MCF 10A (cell line): ENCODE measurements at regions of chr6 and their contacts with region 1.

Region 1: GRCh38 chr6:52724406-52725121 is 38.7 kb downstream of the GSTA2 start:
- DNase-seq: peak; percentile 88
- H3K4me3 Mint-ChIP-seq: peak overlapping the region; percentile 6
- H3K27ac Mint-ChIP-seq: peak overlapping the region; percentile 50
- H3K4me1 Mint-ChIP-seq: peaks cover 28% of the 10 kb centered on the region
- H3K27me3 Mint-ChIP-seq: no peaks in the 10 kb centered on the region
- CTCF ChIP-seq: peak; percentile 47

Region 2: GRCh38 chr6:52840763-52841585 is 116.4 kb after region 1 on chr6 and contains the start of gene GSTA5:
- CTCF ChIA-PET with region 1: no interaction called
- POLR2A ChIA-PET with region 1: no interaction called
- intact Hi-C with region 1: no loop called
- DNase-seq: peak; percentile 30
- H3K4me3 Mint-ChIP-seq: no peak within 1 kb of the TSS
- H3K27ac Mint-ChIP-seq: no peak within 1 kb of the TSS
- H3K4me1 Mint-ChIP-seq: no peaks in the 10 kb centered on the region
- H3K27me3 Mint-ChIP-seq: peaks cover 27% of the 10 kb centered on the region
- CTCF ChIP-seq: no peak
- total RNA-seq, gene GSTA5: not detected in 2 replicates

Region 3: DNA sequence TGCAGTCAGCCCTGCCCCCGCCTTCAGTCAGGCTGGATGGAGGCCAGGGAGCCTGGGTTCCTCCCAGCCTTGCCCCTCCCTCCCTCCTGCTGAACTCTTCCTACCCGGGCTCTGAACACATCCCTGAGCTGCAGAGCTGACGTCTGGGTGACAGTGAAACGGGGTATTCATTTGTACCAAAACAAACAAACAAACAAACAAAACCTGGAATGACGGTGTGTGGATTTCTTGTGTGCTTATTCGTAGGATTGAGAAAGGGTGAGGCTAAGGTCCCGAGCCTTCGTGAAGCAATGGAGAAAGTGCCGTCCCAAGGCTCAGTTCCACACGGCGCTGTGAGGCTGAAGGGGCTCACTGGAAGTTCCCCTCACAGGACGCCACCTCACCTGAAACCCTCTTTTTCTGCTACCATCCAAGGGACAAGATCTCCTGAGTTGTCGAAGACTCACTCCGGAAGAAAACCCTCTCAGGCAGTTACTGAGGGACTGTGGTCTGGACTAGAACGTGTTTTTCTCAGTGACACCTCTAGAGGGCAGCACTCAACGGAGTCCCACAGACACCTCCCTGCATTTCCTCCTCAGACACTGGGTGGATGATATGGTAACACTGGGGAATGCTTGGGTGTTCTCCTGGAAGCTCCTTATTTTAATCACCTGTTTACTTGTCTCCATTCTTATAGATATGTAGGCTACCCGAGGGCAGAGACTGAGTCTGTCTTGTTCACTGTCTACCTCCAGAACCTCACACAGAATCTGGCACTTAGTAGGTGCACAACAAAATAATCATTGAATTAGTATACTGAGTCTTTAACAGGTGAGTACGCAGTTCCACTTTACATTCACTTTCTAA is 157.7 kb after region 1 on chr6:
- CTCF ChIA-PET with region 1: interaction called, 3 read pairs
- POLR2A ChIA-PET with region 1: no interaction called
- intact Hi-C with region 1: loop called (anchors 10 kb)
- DNase-seq: peak; percentile 83
- H3K4me3 Mint-ChIP-seq: peak overlapping the region; percentile 78
- H3K27ac Mint-ChIP-seq: no peak overlapping the region
- H3K4me1 Mint-ChIP-seq: peaks cover 6% of the 10 kb centered on the region
- H3K27me3 Mint-ChIP-seq: peaks cover 21% of the 10 kb centered on the region
- CTCF ChIP-seq: peak; percentile 71